ENCODE measurements at regions of chr9 and their contacts with region 1.

Region 1: GRCh38 chr9:83334320-83334719 is 203.9 kb downstream of the FRMD3 start:
- DNase-seq: peak; percentile 12
- ATAC-seq: peak; percentile 86
- H3K4me3 ChIP-seq: no peak overlapping the region
- H3K27ac ChIP-seq: peak overlapping the region; percentile 79; the same call in 1 of the 2 replicates
- H3K4me1 ChIP-seq: peaks cover 5% of the 10 kb centered on the region
- H3K27me3 ChIP-seq: no peaks in the 10 kb centered on the region
- CTCF ChIP-seq: peak; percentile 90

Region 2: DNA sequence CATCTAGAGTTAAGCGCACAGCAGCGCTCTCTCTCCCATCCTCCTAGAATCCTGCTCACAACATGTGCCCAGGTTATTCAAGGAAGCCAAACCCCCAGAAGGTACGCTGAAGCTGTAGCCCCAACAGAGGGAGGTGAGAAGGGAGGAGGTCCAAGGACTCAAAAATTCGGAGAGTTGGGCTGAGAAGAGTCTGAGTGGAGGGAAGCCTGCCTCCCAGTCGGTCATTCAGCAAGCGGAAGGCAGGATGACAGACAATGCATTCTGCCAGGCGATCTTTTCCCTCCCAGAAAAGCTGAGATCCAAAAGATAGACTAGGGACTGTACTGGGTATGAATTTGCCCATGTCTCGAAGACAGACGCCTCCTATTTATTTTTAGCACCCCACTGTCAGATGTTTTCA is 14.7 kb after region 1 on chr9:
- CTCF ChIA-PET with region 1: interaction called, 18 read pairs
- POLR2A ChIA-PET with region 1: no interaction called
- in situ Hi-C with region 1: no loop called
- intact Hi-C with region 1: no loop called
- DNase-seq: no peak
- ATAC-seq: no peak
- H3K4me3 ChIP-seq: no peak overlapping the region
- H3K27ac ChIP-seq: no peak overlapping the region
- H3K4me1 ChIP-seq: no peaks in the 10 kb centered on the region
- H3K27me3 ChIP-seq: no peaks in the 10 kb centered on the region
- CTCF ChIP-seq: no peak

Region 3: GRCh38 chr9:83538172-83538889 is 204.0 kb after region 1 on chr9 and contains the start of gene FRMD3:
- CTCF ChIA-PET with region 1: interaction called, 24 read pairs
- POLR2A ChIA-PET with region 1: no interaction called
- in situ Hi-C with region 1: no loop called
- intact Hi-C with region 1: loop called (anchors 5 kb)
- DNase-seq: no peak
- ATAC-seq: peak; percentile 95
- H3K4me3 ChIP-seq: peak within 1 kb of the TSS; percentile 66 to 74
- H3K27ac ChIP-seq: peak within 1 kb of the TSS; percentile 80
- H3K4me1 ChIP-seq: peaks cover 11% of the 10 kb centered on the region; the same call in 1 of the 2 replicates
- H3K27me3 ChIP-seq: no peaks in the 10 kb centered on the region
- CTCF ChIP-seq: peak; percentile 82
- total RNA-seq, gene FRMD3: 14.5 TPM

Region 4: DNA sequence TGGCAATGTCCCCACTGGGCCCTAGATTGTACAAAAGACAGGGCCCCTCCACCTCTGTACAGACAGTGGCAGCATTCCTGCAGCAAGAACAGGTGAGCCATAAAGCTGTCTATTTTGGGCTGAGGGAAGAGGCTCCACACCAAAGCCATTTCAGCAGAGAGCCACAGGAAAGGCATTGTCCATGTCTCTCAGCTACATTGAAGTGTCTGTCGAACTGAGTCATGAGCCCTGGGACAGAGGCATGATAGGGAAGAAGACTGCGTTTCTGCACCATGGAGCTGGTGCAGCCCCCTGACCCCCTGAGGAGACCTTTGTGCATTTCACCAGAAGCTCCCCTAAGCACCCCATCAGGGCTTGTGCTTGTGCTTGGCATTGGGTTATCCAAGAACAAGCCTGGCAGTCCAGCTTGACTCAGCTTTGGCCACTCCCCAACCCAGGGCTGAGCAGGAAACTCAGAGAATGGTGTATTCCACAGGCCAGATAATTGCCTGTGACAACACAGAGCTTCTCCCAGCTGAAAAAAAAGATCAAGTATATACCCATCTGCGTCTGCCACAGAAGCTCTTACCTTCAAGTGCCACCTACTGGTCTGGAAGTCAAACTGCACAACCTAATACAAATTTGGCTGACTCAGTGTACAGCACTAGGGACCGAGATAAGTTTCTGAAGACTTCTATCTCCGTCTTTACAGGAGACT is 209.8 kb after region 1 on chr9:
- CTCF ChIA-PET with region 1: interaction called, 24 read pairs
- POLR2A ChIA-PET with region 1: no interaction called
- in situ Hi-C with region 1: no loop called
- intact Hi-C with region 1: loop called (anchors 5 kb)
- DNase-seq: peak; percentile 8
- ATAC-seq: peak; percentile 89
- H3K4me3 ChIP-seq: no peak overlapping the region
- H3K27ac ChIP-seq: no peak overlapping the region
- H3K4me1 ChIP-seq: peaks cover under 1% of the 10 kb centered on the region; the same call in 1 of the 2 replicates
- H3K27me3 ChIP-seq: no peaks in the 10 kb centered on the region
- CTCF ChIP-seq: peak; percentile 72

Region 5: DNA sequence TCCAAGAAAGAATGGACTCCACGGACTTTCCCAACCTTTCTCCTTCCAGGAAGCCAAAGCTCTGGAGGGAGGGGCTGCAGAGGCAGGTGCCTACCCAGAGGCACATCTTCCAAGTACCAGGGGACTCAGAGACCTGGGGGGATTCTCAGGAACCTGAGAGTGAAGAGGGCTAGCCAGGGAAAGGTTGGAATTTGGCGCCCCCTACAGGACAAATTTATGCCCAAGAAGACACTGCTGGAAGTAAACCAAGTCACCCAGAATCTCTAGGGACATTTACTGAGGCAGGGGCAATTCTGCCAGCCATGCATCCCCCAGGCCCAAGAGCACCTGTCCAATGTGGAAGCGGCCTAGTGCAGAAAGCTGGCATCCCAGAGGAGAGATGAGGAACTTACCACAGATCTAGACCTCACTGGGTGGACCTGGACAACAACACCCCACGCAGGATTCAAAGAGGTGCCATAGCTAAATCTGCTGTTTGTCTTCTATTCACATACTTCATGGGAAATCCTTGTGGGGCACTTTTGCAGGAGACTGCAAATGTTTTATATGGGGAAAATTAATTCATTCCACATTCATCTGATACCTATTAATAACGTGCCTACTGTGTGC is 262.7 kb after region 1 on chr9:
- CTCF ChIA-PET with region 1: interaction called, 7 read pairs
- POLR2A ChIA-PET with region 1: no interaction called
- in situ Hi-C with region 1: no loop called
- intact Hi-C with region 1: loop called (anchors 5 kb)
- DNase-seq: no peak
- ATAC-seq: peak; percentile 70; the same call in 1 of the 2 replicates
- H3K4me3 ChIP-seq: no peak overlapping the region
- H3K27ac ChIP-seq: no peak overlapping the region
- H3K4me1 ChIP-seq: no peaks in the 10 kb centered on the region
- H3K27me3 ChIP-seq: no peaks in the 10 kb centered on the region
- CTCF ChIP-seq: peak; percentile 78

Region 6: DNA sequence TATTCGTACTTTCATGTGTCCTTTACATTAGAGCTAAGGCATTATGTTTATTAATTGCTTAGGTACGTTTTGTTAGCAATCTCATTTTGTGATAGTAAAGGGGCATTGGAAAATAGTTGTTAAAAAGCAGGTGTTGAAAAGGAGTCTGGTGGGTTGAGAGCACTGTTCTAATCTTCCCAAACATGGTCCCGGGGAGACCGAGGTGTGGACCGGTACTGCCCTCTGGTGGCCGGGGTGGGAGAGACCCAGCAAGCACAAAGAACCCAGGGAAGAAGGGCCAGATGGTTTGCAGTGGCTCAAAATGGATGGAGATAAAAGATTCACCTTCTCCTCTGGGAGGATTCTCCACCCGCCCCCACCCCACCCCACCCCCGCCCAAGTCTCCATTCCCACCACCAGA is 314.8 kb after region 1 on chr9:
- CTCF ChIA-PET with region 1: no interaction called
- POLR2A ChIA-PET with region 1: no interaction called
- in situ Hi-C with region 1: no loop called
- intact Hi-C with region 1: loop called (anchors 10 kb)
- DNase-seq: peak; percentile 17
- ATAC-seq: peak; percentile 89
- H3K4me3 ChIP-seq: no peak overlapping the region
- H3K27ac ChIP-seq: no peak overlapping the region
- H3K4me1 ChIP-seq: no peaks in the 10 kb centered on the region
- H3K27me3 ChIP-seq: no peaks in the 10 kb centered on the region
- CTCF ChIP-seq: peak; percentile 82

Measured in Panc1 (cell line).